ENCODE measurements at regions of chr12 and their contacts with region 1.

Region 1: DNA sequence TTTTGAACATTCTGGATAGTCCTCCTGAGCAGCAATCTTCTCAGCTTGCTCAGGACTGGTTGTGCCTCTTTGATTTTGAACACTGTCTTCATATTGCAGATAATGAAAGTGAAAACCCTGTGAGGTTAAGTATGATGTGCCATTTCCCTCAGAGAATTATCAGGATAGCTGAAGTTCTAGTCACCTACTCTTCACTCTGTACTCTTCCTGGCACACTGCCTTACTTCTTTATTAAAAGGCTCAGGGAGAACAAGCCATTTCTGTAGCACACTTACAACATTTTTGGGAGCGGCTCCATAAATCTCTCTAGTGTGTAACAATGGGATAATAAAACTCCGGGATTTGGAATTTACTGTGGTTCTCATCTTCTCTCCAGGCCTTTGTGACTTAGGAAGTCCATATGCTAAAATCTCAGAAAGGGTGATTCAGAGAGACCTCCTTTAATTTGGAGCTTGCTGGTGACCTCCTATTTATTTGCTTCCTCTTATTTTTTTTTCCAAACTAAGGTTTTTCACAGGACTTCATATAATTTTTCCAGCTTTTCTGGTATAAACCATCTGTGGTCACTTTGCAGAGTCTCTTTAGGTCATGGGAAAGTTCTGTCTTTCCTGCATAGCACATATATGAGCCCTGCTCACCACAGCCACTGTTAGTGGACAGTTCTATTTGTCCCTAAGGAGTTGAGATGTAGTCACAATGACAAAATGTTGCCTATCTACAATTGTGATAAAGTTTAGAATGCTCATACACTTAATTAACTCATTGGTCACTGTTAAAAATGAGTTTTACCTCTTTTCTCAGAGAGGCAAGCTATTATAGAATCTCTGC is 53.5 kb upstream of the LDHB start:
- DNase-seq: no peak
- H3K4me3 ChIP-seq: no peak overlapping the region
- H3K27ac ChIP-seq: peak overlapping the region in 3 of 4 donors; percentile 3 to 30 (median 26)
- H3K4me1 ChIP-seq: peaks cover 3 to 21% (median 7%) of the 10 kb centered on the region in 4 donors
- H3K27me3 ChIP-seq: no peaks in the 10 kb centered on the region
- CTCF ChIP-seq: no peak
- EP300 ChIP-seq: no peak
- POLR2A ChIP-seq: no peak

Region 2: DNA sequence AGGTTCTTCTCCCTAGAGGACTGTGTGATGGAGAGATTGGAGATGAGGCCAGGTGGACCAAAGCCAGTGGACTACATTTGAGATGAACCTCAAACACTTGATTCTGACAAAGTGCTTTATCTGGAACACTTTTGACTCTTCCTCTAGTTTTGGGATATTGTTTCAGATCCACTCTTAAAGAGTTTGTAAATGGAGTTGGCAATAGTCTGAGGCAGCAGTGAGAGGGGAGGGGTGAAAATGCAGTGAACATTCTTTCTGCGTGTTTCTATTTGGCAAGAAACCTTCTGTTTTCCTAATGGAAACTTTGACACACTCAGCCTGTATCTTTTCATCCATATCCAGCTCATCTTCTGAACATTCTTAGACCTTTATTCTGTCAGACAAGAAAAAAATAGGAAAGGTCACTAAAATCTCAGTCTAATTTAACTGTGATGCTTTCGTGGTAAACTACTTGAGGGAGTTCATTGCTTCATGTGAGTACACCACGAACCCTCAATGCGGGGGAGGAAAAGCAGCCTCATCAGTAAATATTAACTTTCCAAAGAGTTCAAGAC is 120.7 kb after region 1 on chr12:
- in situ Hi-C with region 1: no loop called
- intact Hi-C with region 1: no loop called
- DNase-seq: peak; percentile 9
- H3K4me3 ChIP-seq: no peak overlapping the region
- H3K27ac ChIP-seq: peak overlapping the region; percentile 18 to 64 (median 55)
- H3K4me1 ChIP-seq: peaks cover 0 to 14% (median 2%) of the 10 kb centered on the region in 4 donors
- H3K27me3 ChIP-seq: no peaks in the 10 kb centered on the region
- CTCF ChIP-seq: no peak
- EP300 ChIP-seq: no peak
- POLR2A ChIP-seq: no peak

Region 3: DNA sequence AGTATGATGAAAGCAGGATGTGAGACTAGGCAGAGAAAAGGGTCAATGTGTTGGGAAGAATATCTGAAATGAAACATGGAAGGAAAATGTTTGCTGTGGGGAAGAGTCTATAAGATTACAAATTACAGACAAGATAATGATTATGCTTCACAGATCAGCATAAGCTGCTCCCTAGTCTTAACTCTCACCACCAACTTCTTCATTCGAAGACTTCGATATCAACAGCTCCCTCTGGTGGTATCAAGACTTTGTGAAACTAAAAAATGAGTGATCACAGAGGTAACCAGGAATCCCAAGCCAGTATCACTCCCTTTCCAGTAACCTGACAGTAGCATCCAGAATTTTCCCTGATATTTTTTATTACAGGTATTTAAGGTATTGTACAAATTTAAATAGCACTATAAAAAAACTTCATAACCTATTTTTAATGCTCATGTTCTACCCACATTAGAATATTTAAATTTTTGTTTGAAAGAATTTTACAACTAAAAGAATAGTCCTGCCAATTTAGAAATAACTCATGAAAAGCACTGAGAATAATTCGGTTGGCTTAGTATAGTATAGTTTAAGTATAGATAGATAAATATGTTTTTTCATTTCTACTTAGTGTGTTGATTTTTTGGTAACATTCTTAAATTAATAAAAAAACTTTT is 748.8 kb after region 1 on chr12:
- in situ Hi-C with region 1: loop called in 1 of 4 experiments (anchors 25 kb)
- intact Hi-C with region 1: no loop called
- DNase-seq: no peak
- H3K4me3 ChIP-seq: no peak overlapping the region
- H3K27ac ChIP-seq: no peak overlapping the region
- H3K4me1 ChIP-seq: no peaks in the 10 kb centered on the region
- H3K27me3 ChIP-seq: no peaks in the 10 kb centered on the region
- CTCF ChIP-seq: peak; percentile 28 to 56 (median 51)
- EP300 ChIP-seq: no peak
- POLR2A ChIP-seq: no peak